Sciatic nerve (tissue), 2 donors: ENCODE measurements at regions of chr19 and their contacts with region 1.

Region 1: DNA sequence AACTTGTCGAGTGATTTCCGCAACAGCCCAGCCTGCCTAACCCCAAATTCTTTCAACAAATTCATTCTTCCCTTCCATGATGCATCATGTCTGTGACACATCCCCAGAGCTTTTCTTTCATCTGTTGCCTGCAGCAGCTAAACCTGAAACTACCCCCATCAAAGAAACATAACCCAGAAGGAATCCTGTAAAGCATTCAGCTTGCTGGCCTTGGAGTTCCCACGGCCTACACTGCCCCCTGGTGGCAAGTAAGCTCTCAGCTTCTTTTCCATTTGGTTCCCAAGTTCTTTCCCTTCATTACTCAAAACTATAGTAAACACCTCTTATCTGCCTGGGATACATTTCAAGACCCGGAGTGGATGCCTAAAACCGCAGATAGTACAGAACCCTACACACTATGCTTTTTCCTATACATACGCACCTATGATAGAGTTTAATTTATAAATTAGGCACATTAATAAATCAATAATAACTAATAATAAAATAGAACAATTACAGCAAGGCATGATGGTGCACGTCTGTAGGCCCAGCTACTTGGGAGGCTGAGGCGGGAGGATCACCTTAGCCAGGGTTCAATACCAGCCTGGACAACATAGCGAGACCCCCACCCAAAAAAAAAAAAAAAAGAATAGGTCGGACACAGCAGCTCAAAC is 7.4 kb downstream of the ETHE1 start:
- DNase-seq: peak; percentile 89
- ATAC-seq: peak; percentile 82

Region 2: DNA sequence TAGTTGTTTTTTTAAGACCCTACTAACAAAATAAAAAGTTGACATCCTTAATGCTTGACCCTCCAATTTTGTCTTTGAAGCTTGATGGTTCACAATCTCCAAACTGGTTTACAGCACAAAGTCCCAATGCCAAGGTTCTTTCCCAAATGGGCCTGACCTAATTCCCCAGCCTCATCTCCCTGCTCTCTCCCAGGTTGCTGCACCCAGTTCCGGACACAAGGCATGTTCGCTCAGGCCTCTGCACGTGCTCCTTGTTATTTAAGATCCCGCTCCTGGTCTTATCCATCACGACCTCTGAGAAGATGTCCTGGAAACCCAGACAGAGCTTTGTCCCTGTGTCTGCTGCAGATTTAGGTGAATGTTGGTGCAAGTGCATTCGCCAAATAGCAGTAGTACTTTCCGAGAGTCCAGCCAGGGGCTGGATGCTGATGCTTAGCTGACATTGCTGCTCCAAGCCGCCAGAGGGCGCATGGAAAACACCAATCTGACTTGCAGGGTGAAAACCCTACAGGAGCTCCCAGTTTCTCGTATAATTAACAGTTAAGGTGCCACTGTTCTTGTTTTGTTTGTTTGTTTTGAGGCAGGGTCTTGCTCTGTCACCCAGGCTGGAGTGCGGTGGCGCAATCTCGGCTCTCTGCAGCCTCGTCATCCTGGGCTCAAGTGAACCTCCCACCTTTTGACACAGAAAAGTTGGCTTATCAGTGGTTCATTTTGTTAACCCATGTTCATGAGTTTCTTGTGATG is 72.6 kb before region 1 on chr19:
- intact Hi-C with region 1: loop called (anchors 5 kb)
- DNase-seq: peak; percentile 88
- ATAC-seq: peak; percentile 92

Region 3: DNA sequence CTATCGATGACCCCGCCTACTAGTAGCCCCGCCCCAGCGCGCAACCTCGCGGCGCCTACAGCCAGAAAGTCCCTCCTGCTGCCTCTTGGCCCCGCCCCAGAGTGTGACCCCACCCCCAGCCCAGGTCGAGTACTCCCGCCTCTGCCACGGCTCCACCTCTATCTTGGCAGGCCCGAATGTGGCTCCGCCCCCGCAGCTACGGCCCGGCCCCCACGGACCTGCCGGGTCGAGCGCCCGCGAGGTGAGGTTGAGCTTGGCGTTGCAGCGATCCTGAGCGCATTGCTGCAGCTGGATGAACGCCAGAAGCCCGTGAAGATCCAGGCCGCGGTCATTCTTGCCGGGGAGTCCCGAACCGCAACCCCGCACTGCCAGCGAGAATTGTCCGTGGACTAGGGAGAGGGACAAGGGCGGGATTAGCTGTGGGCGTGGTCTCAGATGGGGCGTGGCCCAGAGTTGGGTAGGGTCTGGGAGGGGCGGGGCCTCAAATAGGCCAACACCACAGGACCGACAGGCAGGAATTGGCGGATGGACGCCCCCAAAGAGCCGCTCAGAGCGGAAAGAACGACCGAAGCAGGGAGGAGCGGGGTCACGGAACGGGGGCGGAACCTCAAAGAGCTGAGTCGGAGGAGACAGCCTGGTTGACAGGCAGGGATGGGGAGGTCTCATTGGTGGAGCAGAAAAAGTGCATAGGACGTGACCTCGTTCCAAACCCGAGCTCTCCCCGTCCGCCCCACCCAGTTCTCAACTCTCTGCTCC is 56.0 kb before region 1 on chr19:
- intact Hi-C with region 1: no loop called
- DNase-seq: peak; percentile 100
- ATAC-seq: peak; percentile 96